ENCODE measurements at regions of chr4 and their contacts with region 1.

Region 1: GRCh38 chr4:1856042-1856788 is at the start of gene LETM1:
- DNase-seq: peak; percentile 98
- H3K4me3 ChIP-seq: peak within 1 kb of the TSS; percentile 76 to 81
- H3K27ac ChIP-seq: peak within 1 kb of the TSS; percentile 74 to 83
- H3K4me1 ChIP-seq: peaks cover 0 to 13% of the 10 kb centered on the region in 2 experiments; a peak in 1 of 4 replicates
- H3K27me3 ChIP-seq: no peaks in the 10 kb centered on the region
- CTCF ChIP-seq: peak; percentile 34
- EP300 ChIP-seq: no peak
- RAD21 ChIP-seq: no peak
- polyA plus RNA-seq, gene LETM1: 25.8 and 26.7 TPM in 2 replicates

Region 2: GRCh38 chr4:1870578-1871443 is 14.6 kb after region 1 on chr4 and contains the start of gene NSD2:
- CTCF ChIA-PET with region 1: interaction called, 6 read pairs
- POLR2A ChIA-PET with region 1: interaction called, 11 read pairs
- DNase-seq: peak; percentile 98
- H3K4me3 ChIP-seq: peak within 1 kb of the TSS; percentile 75 to 79
- H3K27ac ChIP-seq: peak within 1 kb of the TSS; percentile 91 to 92
- H3K4me1 ChIP-seq: peaks cover 17 to 26% of the 10 kb centered on the region in 2 experiments
- H3K27me3 ChIP-seq: no peaks in the 10 kb centered on the region
- CTCF ChIP-seq: no peak
- EP300 ChIP-seq: no peak
- RAD21 ChIP-seq: no peak
- polyA plus RNA-seq, gene NSD2: 28.0 and 34.2 TPM in 2 replicates

Measured in SK-N-SH (cell line).